Activated CD4-positive, alpha-beta T cell treated with anti-CD3 and anti-CD28 coated beads for 36 hours (primary cell): ENCODE measurements at regions of chr3 and their contacts with region 1.

Region 1: GRCh38 chr3:36911990-36912804 is 32.7 kb downstream of the TRANK1 start:
- DNase-seq: peak; percentile 57
- ATAC-seq: peak; percentile 87
- H3K4me3 Mint-ChIP-seq: peak overlapping the region; percentile 61
- H3K27ac Mint-ChIP-seq: peak overlapping the region; percentile 85
- H3K4me1 Mint-ChIP-seq: peaks cover 44% of the 10 kb centered on the region
- H3K27me3 Mint-ChIP-seq: peaks cover 2% of the 10 kb centered on the region

Region 2: DNA sequence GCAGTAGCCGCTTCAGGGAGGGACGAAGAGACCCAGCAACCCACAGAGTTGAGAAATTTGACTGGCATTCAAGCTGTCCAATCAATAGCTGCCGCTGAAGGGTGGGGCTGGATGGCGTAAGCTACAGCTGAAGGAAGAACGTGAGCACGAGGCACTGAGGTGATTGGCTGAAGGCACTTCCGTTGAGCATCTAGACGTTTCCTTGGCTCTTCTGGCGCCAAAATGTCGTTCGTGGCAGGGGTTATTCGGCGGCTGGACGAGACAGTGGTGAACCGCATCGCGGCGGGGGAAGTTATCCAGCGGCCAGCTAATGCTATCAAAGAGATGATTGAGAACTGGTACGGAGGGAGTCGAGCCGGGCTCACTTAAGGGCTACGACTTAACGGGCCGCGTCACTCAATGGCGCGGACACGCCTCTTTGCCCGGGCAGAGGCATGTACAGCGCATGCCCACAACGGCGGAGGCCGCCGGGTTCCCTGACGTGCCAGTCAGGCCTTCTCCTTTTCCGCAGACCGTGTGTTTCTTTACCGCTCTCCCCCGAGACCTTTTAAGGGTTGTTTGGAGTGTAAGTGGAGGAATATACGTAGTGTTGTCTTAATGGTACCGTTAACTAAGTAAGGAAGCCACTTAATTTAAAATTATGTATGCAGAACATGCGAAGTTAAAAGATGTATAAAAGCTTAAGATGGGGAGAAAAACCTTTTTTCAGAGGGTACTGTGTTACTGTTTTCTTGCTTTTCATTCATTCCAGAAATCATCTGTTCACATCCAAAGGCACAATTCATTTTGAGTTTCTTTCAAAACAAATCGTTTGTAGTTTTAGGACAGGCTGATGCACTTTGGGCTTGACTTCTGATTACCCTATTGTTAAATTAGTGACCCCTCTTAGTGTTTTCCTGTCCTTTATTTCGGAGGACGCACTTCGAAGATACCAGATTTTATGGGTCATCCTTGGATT is 81.4 kb after region 1 on chr3 and contains the start of gene MLH1:
- CTCF ChIA-PET with region 1: no interaction called
- POLR2A ChIA-PET with region 1: interaction called, 3 read pairs
- intact Hi-C with region 1: loop called (anchors 1 to 5 kb)
- DNase-seq: peak; percentile 98
- ATAC-seq: peak; percentile 90
- H3K4me3 Mint-ChIP-seq: no peak within 1 kb of the TSS
- H3K27ac Mint-ChIP-seq: no peak within 1 kb of the TSS
- H3K4me1 Mint-ChIP-seq: peaks cover 43% of the 10 kb centered on the region
- H3K27me3 Mint-ChIP-seq: no peaks in the 10 kb centered on the region
- total RNA-seq, gene MLH1: 89.0 to 135 TPM

Region 3: DNA sequence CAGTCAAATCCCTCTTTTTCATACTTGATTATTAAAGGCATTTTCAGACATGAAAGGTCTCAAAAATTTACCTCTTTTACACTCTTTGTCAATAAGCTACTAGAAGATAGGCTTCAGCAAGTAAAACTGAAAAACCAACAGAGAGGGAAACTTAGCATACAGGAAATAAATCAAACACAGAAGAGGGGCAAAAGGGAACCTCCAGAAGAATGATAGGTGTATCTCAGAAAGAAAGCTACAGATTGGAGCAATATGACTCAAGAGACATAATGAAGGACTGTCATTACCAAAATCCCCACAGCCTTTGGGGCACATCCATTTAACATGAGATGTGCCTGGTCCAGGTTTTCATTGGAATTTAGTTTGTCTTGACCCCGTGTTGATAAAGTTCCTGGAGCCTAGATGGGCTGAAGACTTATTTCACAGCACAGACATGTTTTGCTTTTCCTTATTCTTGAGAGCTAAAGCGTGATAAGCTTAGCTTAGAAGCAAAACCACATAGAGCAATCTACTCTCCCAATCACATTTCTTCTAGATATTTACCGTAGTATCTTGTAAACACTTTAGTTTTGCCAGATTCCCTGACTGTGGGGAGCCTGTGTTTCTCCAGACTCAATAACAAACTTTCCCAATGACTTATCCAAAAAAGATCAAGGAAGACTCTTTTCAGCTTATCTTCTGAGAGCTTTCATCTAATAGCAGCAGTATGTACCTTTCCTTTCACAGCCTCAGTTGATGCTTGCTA is 250.5 kb after region 1 on chr3:
- CTCF ChIA-PET with region 1: no interaction called
- POLR2A ChIA-PET with region 1: no interaction called
- intact Hi-C with region 1: no loop called
- DNase-seq: no peak
- ATAC-seq: peak; percentile 82
- H3K4me3 Mint-ChIP-seq: peak overlapping the region; percentile 9
- H3K27ac Mint-ChIP-seq: peak overlapping the region; percentile 82
- H3K4me1 Mint-ChIP-seq: peaks cover 32% of the 10 kb centered on the region
- H3K27me3 Mint-ChIP-seq: no peaks in the 10 kb centered on the region